ENCODE measurements at regions of chr20 and their contacts with region 1.

Region 1: DNA sequence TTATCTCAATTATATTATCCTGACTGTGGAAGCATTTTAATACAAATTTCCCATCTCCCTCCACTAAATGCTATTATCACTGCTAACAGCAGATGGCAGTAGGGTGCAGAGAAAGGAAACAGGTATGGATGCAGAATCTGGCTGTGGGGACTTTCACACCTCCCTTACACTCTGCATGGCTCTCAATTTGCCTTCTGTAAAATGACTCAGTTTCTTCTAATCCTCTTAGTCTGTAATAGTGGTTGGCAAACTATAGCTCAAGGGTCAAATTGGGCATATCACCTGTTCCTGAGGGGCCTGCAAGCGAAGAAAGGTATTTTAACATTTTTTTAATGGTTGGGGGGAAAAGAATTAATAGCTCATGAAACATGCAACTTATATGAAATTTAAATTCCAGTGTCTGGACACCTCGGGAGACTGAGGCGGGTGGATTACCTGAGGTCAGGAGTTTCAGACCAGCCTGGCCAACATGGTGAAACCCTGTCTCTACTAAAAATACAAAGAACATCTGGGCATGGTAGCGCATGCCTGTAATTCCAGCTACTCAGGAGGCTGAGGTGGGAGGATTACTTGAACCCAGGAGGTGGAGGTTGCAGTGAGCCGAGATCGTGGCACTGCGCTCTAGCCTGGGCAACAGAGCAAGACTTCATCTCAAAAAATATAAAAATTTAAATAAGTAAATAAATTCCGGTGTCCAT is 83.5 kb downstream of the ZMYND8 start:
- DNase-seq: peak; percentile 79
- ATAC-seq: peak; percentile 86
- H3K4me3 ChIP-seq: no peak overlapping the region
- H3K4me3 Mint-ChIP-seq: no peak overlapping the region
- H3K27ac ChIP-seq: no peak overlapping the region
- H3K27ac Mint-ChIP-seq: peak overlapping the region; percentile 74
- H3K4me1 ChIP-seq: peaks cover 0 to 5% of the 10 kb centered on the region in 2 donors
- H3K4me1 Mint-ChIP-seq: peaks cover 25% of the 10 kb centered on the region
- H3K27me3 ChIP-seq: no peaks in the 10 kb centered on the region
- H3K27me3 Mint-ChIP-seq: no peaks in the 10 kb centered on the region
- CTCF ChIP-seq: peak; percentile 95

Region 2: DNA sequence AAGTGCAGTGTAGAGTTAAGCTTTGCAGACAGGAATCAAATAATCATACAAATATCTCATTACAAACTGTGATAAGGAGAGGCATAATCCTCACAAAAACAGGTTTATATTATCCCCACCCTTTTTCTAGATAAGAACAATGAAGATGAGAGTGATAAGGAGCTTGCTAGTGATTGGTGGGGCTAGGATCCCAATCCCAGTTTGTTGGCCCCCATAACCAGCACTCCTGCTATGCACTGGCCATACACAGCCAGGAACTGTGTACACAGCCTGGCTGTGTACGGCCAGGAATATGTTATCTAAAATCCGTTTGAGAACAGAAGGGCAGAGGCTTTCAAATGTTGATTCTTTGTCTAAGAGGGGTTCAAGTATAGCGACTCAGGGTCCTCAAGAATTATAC is 197.8 kb before region 1 on chr20:
- CTCF ChIA-PET with region 1: no interaction called
- POLR2A ChIA-PET with region 1: no interaction called
- intact Hi-C with region 1: no loop called
- DNase-seq: no peak
- ATAC-seq: no peak
- H3K4me3 ChIP-seq: no peak overlapping the region
- H3K4me3 Mint-ChIP-seq: no peak overlapping the region
- H3K27ac ChIP-seq: no peak overlapping the region
- H3K27ac Mint-ChIP-seq: no peak overlapping the region
- H3K4me1 ChIP-seq: no peaks in the 10 kb centered on the region
- H3K4me1 Mint-ChIP-seq: no peaks in the 10 kb centered on the region
- H3K27me3 ChIP-seq: no peaks in the 10 kb centered on the region
- H3K27me3 Mint-ChIP-seq: peaks cover 37% of the 10 kb centered on the region
- CTCF ChIP-seq: no peak

Region 3: GRCh38 chr20:47258745-47259695 is 14.0 kb before region 1 on chr20:
- CTCF ChIA-PET with region 1: interaction called, 56 read pairs
- POLR2A ChIA-PET with region 1: no interaction called
- intact Hi-C with region 1: no loop called
- DNase-seq: peak; percentile 78
- ATAC-seq: peak; percentile 31
- H3K4me3 ChIP-seq: peak overlapping the region in 1 of 5 experiments; percentile 8
- H3K4me3 Mint-ChIP-seq: peak overlapping the region; percentile 81
- H3K27ac ChIP-seq: peak overlapping the region; percentile 75 to 78
- H3K27ac Mint-ChIP-seq: peak overlapping the region; percentile 93
- H3K4me1 ChIP-seq: peaks cover 53 to 62% of the 10 kb centered on the region in 2 donors
- H3K4me1 Mint-ChIP-seq: peaks cover 69% of the 10 kb centered on the region
- H3K27me3 ChIP-seq: no peaks in the 10 kb centered on the region
- H3K27me3 Mint-ChIP-seq: no peaks in the 10 kb centered on the region
- CTCF ChIP-seq: no peak

Region 4: GRCh38 chr20:47356526-47357295 is 83.7 kb after region 1 on chr20 and contains the start of gene ZMYND8:
- CTCF ChIA-PET with region 1: interaction called, 70 read pairs
- POLR2A ChIA-PET with region 1: no interaction called
- intact Hi-C with region 1: no loop called
- DNase-seq: peak; percentile 98
- ATAC-seq: peak; percentile 81
- H3K4me3 ChIP-seq: peak within 1 kb of the TSS; percentile 42 to 68 (median 56)
- H3K4me3 Mint-ChIP-seq: peak within 1 kb of the TSS; percentile 92
- H3K27ac ChIP-seq: peak within 1 kb of the TSS; percentile 90
- H3K27ac Mint-ChIP-seq: peak within 1 kb of the TSS; percentile 99
- H3K4me1 ChIP-seq: peaks cover 89 to 97% of the 10 kb centered on the region in 2 donors
- H3K4me1 Mint-ChIP-seq: peaks cover 57% of the 10 kb centered on the region
- H3K27me3 ChIP-seq: no peaks in the 10 kb centered on the region
- H3K27me3 Mint-ChIP-seq: no peaks in the 10 kb centered on the region
- CTCF ChIP-seq: no peak
- total RNA-seq, gene ZMYND8: 67.2 and 71.6 TPM in 2 replicates

Region 5: GRCh38 chr20:47418061-47418912 is 145.2 kb after region 1 on chr20:
- CTCF ChIA-PET with region 1: interaction called, 21 read pairs
- POLR2A ChIA-PET with region 1: interaction called, 10 read pairs
- intact Hi-C with region 1: no loop called
- DNase-seq: no peak
- ATAC-seq: no peak
- H3K4me3 ChIP-seq: no peak overlapping the region
- H3K4me3 Mint-ChIP-seq: no peak overlapping the region
- H3K27ac ChIP-seq: peak overlapping the region; percentile 97 to 99
- H3K27ac Mint-ChIP-seq: peak overlapping the region; percentile 99
- H3K4me1 ChIP-seq: peaks cover 59 to 73% of the 10 kb centered on the region in 2 donors
- H3K4me1 Mint-ChIP-seq: peaks cover 67% of the 10 kb centered on the region
- H3K27me3 ChIP-seq: no peaks in the 10 kb centered on the region
- H3K27me3 Mint-ChIP-seq: no peaks in the 10 kb centered on the region
- CTCF ChIP-seq: no peak